ENCODE measurements at regions of chr11 and their contacts with region 1.

Region 1: GRCh38 chr11:126716456-126717083 is 284.0 kb downstream of the KIRREL3 start:
- DNase-seq: peak in 2 of 3 donors; percentile 50 to 81
- ATAC-seq: peak; percentile 63
- H3K4me3 ChIP-seq: no peak overlapping the region
- H3K4me1 ChIP-seq: no peaks in the 10 kb centered on the region
- CTCF ChIP-seq: no peak

Region 2: DNA sequence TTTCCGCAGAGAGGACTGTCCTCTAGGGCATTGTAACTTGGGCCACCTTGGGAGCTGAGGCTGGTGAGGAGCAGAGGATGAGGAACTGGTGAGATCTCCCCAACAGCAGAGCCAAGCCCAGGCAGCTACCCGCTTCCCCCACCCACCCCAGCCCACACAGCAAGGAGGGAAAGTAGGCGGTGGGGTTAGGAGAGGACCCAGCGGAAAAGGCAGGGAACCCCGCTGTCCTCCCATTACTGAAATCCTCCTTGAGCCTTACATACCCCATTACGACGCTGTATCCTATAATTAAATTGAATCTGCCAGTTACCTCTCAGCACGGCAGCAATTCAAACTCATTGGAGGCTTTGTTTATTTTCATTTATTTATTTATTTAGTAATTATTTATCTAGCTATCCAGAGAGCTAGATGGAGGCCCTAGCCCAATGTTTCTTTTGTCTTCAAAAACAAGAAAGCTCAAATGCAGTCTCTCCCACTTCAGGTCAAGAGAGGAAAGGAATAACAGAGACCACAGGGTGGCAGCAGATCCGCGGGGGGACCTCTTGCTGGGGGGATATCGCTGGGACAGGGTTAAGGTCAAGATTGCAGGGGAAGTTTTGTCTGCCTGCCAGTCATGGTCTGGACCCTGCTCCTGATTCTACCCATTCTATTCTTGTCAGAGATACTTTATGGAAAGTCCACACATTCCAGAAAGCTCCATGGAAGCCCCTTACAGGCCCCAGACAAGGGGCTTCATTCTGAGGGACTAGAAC is 143.1 kb before region 1 on chr11:
- intact Hi-C with region 1: no loop called
- DNase-seq: no peak
- ATAC-seq: no peak
- H3K4me3 ChIP-seq: no peak overlapping the region
- H3K4me1 ChIP-seq: no peaks in the 10 kb centered on the region
- CTCF ChIP-seq: no peak

Region 3: GRCh38 chr11:126834149-126834548 is 117.6 kb after region 1 on chr11:
- intact Hi-C with region 1: no loop called
- DNase-seq: no peak
- ATAC-seq: no peak
- H3K4me3 ChIP-seq: no peak overlapping the region
- H3K4me1 ChIP-seq: no peaks in the 10 kb centered on the region
- CTCF ChIP-seq: no peak

Region 4: DNA sequence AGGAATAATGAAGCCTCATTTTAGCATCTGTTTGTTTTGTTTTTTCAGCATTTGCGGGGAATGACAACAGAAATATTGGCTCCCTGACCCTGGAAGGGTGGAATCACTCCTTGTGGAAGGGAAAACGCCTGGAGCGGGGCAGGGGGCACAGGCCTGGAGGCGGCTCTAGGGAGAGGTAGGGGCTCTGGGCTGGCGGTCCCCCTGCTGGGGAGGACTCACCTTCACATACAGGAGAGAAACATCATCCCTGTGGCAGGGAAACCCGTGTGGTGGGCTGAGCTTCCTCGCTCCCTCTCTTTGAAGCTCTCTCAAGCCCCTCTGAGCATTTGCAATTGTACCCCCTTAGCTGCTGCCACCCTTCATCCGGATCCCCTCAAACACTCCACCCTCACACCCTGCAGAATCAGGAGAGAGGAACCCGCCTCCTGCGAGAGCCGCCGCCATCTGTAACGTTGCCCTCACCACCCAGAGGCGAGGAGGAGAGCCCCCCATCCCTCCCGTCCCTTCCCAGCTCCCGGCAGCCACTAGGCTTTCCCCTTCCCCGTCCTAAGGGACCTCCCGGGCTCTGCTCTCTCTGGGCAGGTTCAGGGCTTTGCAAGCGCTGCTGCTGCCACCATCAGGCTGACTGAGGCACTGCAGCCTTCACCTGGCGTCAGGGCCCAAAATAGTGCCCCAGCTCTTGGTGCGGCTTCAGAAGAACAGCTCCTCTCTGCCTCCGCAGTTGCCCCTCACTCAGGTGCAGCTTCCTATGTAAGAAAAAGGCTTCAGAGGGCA is 273.6 kb after region 1 on chr11:
- intact Hi-C with region 1: loop called (anchors 5 to 10 kb)
- DNase-seq: peak; percentile 62 to 80 (median 78)
- ATAC-seq: peak; percentile 86
- H3K4me3 ChIP-seq: no peak overlapping the region
- H3K4me1 ChIP-seq: no peaks in the 10 kb centered on the region
- CTCF ChIP-seq: peak; percentile 91